ENCODE measurements at regions of chr11 and their contacts with region 1.

Region 1: DNA sequence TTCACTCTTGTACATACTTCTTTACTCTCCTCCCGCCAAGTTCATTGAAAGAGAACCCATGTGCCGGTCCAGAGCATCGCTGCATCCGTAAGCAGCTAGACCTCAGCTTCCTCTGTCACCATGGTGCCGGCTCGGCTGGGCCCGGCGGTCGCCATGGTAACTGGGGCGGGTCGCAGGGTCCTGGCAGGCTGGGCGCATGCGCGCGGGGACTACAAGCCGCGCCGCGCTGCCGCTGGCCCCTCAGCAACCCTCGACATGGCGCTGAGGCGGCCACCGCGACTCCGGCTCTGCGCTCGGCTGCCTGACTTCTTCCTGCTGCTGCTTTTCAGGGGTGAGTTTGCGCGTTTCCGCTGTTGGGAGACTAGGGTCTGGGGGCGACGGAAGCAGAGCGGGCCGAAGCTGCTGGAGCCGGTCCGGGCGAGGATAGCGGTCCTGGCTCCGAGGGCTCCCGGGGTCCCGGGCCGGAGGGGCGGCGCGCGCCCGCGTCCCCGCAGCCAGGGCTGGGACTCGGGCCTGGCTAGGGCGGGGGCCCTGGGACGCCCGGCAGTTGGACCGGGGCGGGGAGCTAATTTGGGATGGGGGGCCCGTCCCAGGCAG is at the start of gene JAM3:
- DNase-seq: peak; percentile 94 to 99 (median 97)
- ATAC-seq: peak; percentile 90
- H3K4me3 ChIP-seq: peak within 1 kb of the TSS; percentile 51
- H3K4me3 Mint-ChIP-seq: peak within 1 kb of the TSS; percentile 94
- H3K27ac ChIP-seq: no peak within 1 kb of the TSS
- H3K27ac Mint-ChIP-seq: peak within 1 kb of the TSS; percentile 81
- H3K4me1 ChIP-seq: peaks cover 9% of the 10 kb centered on the region
- H3K4me1 Mint-ChIP-seq: peaks cover 20% of the 10 kb centered on the region
- H3K27me3 ChIP-seq: peaks cover 0 to 3% of the 10 kb centered on the region in 2 experiments
- H3K27me3 Mint-ChIP-seq: no peaks in the 10 kb centered on the region
- CTCF ChIP-seq: no peak
- total RNA-seq, gene JAM3: 13.5 to 15.3 TPM

Region 2: GRCh38 chr11:133947321-133947756 is 121.6 kb before region 1 on chr11:
- CTCF ChIA-PET with region 1: interaction called, 3 read pairs
- POLR2A ChIA-PET with region 1: interaction called, 6 read pairs
- intact Hi-C with region 1: loop called in 1 of 2 experiments (anchors 1 kb)
- DNase-seq: peak; percentile 41 to 85 (median 62)
- ATAC-seq: peak; percentile 32
- H3K4me3 ChIP-seq: peak overlapping the region; percentile 30
- H3K4me3 Mint-ChIP-seq: peak overlapping the region; percentile 68
- H3K27ac ChIP-seq: peak overlapping the region in 1 of 2 donors; percentile 47
- H3K27ac Mint-ChIP-seq: peak overlapping the region; percentile 89
- H3K4me1 ChIP-seq: peaks cover 69% of the 10 kb centered on the region
- H3K4me1 Mint-ChIP-seq: peaks cover 69% of the 10 kb centered on the region
- H3K27me3 ChIP-seq: no peaks in the 10 kb centered on the region
- H3K27me3 Mint-ChIP-seq: peaks cover under 1% of the 10 kb centered on the region
- CTCF ChIP-seq: peak; percentile 49

Region 3: GRCh38 chr11:134033696-134034491 is 35.0 kb before region 1 on chr11:
- CTCF ChIA-PET with region 1: no interaction called
- POLR2A ChIA-PET with region 1: interaction called, 12 read pairs
- intact Hi-C with region 1: no loop called
- DNase-seq: peak; percentile 47 to 82 (median 62)
- ATAC-seq: peak; percentile 81
- H3K4me3 ChIP-seq: peak overlapping the region; percentile 39
- H3K4me3 Mint-ChIP-seq: peak overlapping the region; percentile 79
- H3K27ac ChIP-seq: no peak overlapping the region
- H3K27ac Mint-ChIP-seq: peak overlapping the region; percentile 81
- H3K4me1 ChIP-seq: peaks cover 53% of the 10 kb centered on the region
- H3K4me1 Mint-ChIP-seq: peaks cover 71% of the 10 kb centered on the region
- H3K27me3 ChIP-seq: no peaks in the 10 kb centered on the region
- H3K27me3 Mint-ChIP-seq: no peaks in the 10 kb centered on the region
- CTCF ChIP-seq: no peak

Region 4: GRCh38 chr11:134050541-134051383 is 18.2 kb before region 1 on chr11:
- CTCF ChIA-PET with region 1: interaction called, 8 read pairs
- POLR2A ChIA-PET with region 1: interaction called, 11 read pairs
- intact Hi-C with region 1: no loop called
- DNase-seq: peak; percentile 55 to 87 (median 70)
- ATAC-seq: peak; percentile 96
- H3K4me3 ChIP-seq: no peak overlapping the region
- H3K4me3 Mint-ChIP-seq: no peak overlapping the region
- H3K27ac ChIP-seq: no peak overlapping the region
- H3K27ac Mint-ChIP-seq: no peak overlapping the region
- H3K4me1 ChIP-seq: peaks cover 8% of the 10 kb centered on the region
- H3K4me1 Mint-ChIP-seq: peaks cover 5% of the 10 kb centered on the region
- H3K27me3 ChIP-seq: peaks cover 0 to 9% of the 10 kb centered on the region in 2 experiments
- H3K27me3 Mint-ChIP-seq: peaks cover 34% of the 10 kb centered on the region
- CTCF ChIP-seq: peak; percentile 93

Region 5: DNA sequence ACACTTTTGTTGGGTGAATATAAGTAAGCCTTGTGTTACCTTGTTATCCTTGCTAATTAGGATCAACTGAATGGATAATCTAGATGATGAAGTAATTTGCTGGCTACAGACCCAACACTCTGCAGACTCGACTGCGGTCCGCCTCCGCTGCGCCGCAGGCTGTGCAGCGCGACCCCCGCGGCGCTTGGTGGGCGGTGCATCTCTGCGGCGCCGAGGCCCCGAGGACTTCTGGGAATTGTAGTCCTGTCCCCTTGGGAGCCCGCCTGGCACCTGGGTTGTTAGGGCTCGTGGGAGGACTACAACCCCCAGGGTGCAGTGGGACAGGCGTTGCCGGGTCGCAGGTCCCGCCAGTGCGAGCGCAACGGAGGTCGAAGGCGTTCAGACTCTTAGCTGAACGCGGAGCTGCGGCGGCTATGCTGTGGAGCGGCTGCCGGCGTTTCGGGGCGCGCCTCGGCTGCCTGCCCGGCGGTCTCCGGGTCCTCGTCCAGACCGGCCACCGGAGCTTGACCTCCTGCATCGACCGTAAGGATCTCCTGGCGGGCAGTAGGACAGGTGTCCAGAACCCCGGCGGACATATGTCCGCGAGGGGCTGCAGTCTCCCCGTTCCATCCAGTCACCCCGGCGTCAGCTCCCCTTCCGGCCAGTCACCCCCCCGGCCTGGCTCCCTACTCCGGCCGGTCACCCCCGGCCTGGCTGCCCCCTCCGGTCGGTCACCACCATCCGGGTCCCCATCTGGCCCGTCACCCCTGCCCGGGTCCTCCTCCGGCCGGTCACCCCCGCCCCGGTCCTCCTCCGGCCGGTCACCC is 184.5 kb after region 1 on chr11 and contains the starts of genes ACAD8 and THYN1:
- CTCF ChIA-PET with region 1: no interaction called
- POLR2A ChIA-PET with region 1: no interaction called
- intact Hi-C with region 1: loop called in 1 of 2 experiments (anchors 10 kb)
- DNase-seq: peak; percentile 90 to 98 (median 94)
- ATAC-seq: peak; percentile 99
- H3K4me3 ChIP-seq: peak within 1 kb of the TSS; percentile 84
- H3K4me3 Mint-ChIP-seq: peak within 1 kb of the TSS; percentile 94
- H3K27ac ChIP-seq: peak within 1 kb of the TSS in 1 of 2 donors; percentile 51
- H3K27ac Mint-ChIP-seq: peak within 1 kb of the TSS; percentile 69
- H3K4me1 ChIP-seq: peaks cover 19% of the 10 kb centered on the region
- H3K4me1 Mint-ChIP-seq: peaks cover 40% of the 10 kb centered on the region
- H3K27me3 ChIP-seq: no peaks in the 10 kb centered on the region
- H3K27me3 Mint-ChIP-seq: no peaks in the 10 kb centered on the region
- CTCF ChIP-seq: peak; percentile 36
- total RNA-seq, gene ACAD8: 15.0 to 16.3 TPM
- total RNA-seq, gene THYN1: 25.7 to 26.0 TPM

Region 6: DNA sequence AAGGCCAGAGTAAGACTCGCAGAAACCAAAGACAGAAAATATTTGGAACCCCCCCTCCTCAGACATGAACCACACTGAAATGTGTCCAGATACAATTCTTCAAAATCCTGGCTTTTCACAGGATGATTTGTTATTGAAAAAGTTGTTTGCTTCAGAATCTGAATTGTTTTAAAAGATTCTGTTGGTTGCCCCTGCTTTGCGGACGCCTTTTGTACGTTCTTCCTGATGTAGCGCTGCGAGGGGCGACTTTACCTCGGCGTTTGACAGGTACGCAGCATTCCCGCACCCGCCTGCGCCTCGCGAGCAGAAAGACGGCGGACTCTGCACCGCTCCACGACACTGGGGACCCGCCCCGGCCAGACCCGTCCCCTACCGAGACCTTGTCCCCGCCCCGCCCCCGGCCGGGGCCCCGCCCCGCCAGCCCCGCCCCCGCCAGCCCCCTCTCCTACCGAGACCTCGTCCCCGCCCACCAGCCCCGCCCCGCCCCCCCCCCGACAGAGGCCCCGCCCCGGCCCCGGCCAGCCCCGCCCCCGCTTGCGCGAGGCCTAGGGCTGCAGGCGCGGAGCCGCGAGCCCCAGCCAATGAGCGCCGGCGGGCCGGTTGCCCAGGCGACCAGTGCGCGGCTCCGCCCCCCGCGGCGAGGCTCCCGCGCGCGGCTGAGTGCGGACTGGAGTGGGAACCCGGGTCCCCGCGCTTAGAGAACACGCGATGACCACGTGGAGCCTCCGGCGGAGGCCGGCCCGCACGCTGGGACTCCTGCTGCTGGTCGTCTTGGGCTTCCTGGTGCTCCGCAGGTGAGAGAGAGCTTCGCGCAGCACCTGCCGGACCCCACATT is 262.6 kb after region 1 on chr11 and contains the start of gene GLB1L2:
- CTCF ChIA-PET with region 1: no interaction called
- POLR2A ChIA-PET with region 1: no interaction called
- intact Hi-C with region 1: loop called in 1 of 2 experiments (anchors 10 kb)
- DNase-seq: peak; percentile 65 to 93 (median 77)
- ATAC-seq: peak; percentile 91
- H3K4me3 ChIP-seq: peak within 1 kb of the TSS; percentile 80
- H3K4me3 Mint-ChIP-seq: peak within 1 kb of the TSS; percentile 93
- H3K27ac ChIP-seq: no peak within 1 kb of the TSS
- H3K27ac Mint-ChIP-seq: no peak within 1 kb of the TSS
- H3K4me1 ChIP-seq: peaks cover 22% of the 10 kb centered on the region
- H3K4me1 Mint-ChIP-seq: peaks cover 19% of the 10 kb centered on the region
- H3K27me3 ChIP-seq: peaks cover 0 to 4% of the 10 kb centered on the region in 2 experiments
- H3K27me3 Mint-ChIP-seq: peaks cover 36% of the 10 kb centered on the region
- CTCF ChIP-seq: no peak
- total RNA-seq, gene GLB1L2: 0.59 to 0.63 TPM